Astrocyte of the cerebellum (primary cell): ENCODE measurements at regions of chr5 and their contacts with region 1.

Region 1: DNA sequence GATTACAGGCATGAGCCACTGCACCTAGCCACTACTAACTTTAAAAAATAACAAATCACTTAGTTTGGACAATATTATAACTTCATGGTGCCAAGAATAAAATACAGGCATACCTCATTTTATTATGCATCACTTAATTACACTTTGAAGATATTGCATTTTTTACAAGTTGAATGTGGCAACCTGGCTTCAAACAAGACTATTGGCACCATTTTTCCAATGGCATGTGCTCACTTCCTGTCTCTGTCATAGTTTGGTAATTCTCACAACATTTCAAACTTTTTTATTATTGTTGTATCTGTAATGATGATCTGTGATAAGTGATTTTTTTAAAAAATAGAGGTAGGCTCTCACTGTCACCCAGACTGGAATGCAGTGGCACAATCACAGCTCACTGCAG is 49.9 kb upstream of the ERBIN start:
- DNase-seq: no peak
- H3K4me3 ChIP-seq: no peak overlapping the region
- CTCF ChIP-seq: no peak

Region 2: GRCh38 chr5:65913519-65913918 is 37.0 kb after region 1 on chr5:
- in situ Hi-C with region 1: loop called (anchors 5 kb)
- DNase-seq: no peak
- H3K4me3 ChIP-seq: no peak overlapping the region
- CTCF ChIP-seq: no peak